ENCODE measurements at regions of chr13 and their contacts with region 1.

Region 1: GRCh38 chr13:76980075-76980718 is 11.7 kb upstream of the CLN5 start:
- DNase-seq: peak; percentile 72 to 92 (median 79)
- ATAC-seq: peak; percentile 91 to 98 (median 94)
- H3K4me3 ChIP-seq: peak overlapping the region in 10 of 12 donors; percentile 20 to 50 (median 33)
- H3K27ac ChIP-seq: no peak overlapping the region
- H3K4me1 ChIP-seq: peaks cover 0 to 11% (median 2%) of the 10 kb centered on the region in 12 donors
- H3K27me3 ChIP-seq: peaks cover 0 to 38% (median 6%) of the 10 kb centered on the region in 9 donors
- CTCF ChIP-seq: peak; percentile 93 to 100 (median 96)
- POLR2A ChIP-seq: no peak

Region 2: DNA sequence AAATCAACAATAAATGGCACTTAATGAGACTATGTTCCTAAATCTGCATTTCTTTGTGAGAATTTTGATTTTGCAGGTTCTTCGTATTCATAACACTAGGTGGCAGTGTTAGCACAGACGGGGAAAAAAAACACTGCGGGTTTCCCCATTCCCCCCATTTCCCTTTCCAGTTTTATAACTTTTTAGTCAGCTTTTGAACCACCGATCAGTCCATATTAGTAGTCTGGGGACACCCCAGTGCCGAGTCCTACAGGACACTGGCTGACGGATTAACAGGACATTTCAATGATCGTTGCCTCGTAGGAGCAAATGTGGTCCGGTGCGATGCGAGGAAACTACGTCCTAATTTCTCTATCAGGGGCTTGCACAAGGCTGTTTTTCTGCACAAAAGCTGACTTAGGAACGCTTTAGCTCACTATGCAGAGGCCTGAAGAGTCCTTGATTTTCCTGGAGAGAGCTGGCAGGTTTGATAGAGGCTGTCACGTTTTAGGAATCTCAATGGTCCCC is 1109.7 kb before region 1 on chr13:
- intact Hi-C with region 1: loop called in 8 of 10 experiments (anchors 2 to 10 kb)
- DNase-seq: no peak
- ATAC-seq: peak in 2 of 4 donors; percentile 29 to 45
- H3K4me3 ChIP-seq: peak overlapping the region in 11 of 12 donors; percentile 10 to 62 (median 45)
- H3K27ac ChIP-seq: no peak overlapping the region
- H3K4me1 ChIP-seq: peaks cover 0 to 8% (median 0%) of the 10 kb centered on the region in 12 donors
- H3K27me3 ChIP-seq: no peaks in the 10 kb centered on the region
- CTCF ChIP-seq: peak; percentile 66 to 84 (median 74)
- POLR2A ChIP-seq: no peak